WTC11 (cell line): ENCODE measurements at regions of chr5 and their contacts with region 1.

Region 1: GRCh38 chr5:175729829-175730277 is 72.0 kb downstream of the HRH2 start:
- DNase-seq: peak; percentile 100
- ATAC-seq: peak; percentile 87
- H3K4me3 Mint-ChIP-seq: peak overlapping the region; percentile 74
- H3K27ac Mint-ChIP-seq: no peak overlapping the region
- H3K4me1 Mint-ChIP-seq: peaks cover 27% of the 10 kb centered on the region
- H3K27me3 Mint-ChIP-seq: peaks cover 5% of the 10 kb centered on the region
- CTCF ChIP-seq: peak; percentile 98

Region 2: GRCh38 chr5:175288048-175288621 is 441.7 kb before region 1 on chr5:
- CTCF ChIA-PET with region 1: no interaction called
- POLR2A ChIA-PET with region 1: no interaction called
- DNase-seq: no peak
- ATAC-seq: no peak
- H3K4me3 Mint-ChIP-seq: no peak overlapping the region
- H3K27ac Mint-ChIP-seq: no peak overlapping the region
- H3K4me1 Mint-ChIP-seq: no peaks in the 10 kb centered on the region
- H3K27me3 Mint-ChIP-seq: no peaks in the 10 kb centered on the region
- CTCF ChIP-seq: no peak

Region 3: GRCh38 chr5:175325681-175326080 is 404.2 kb before region 1 on chr5:
- CTCF ChIA-PET with region 1: no interaction called
- POLR2A ChIA-PET with region 1: no interaction called
- DNase-seq: no peak
- ATAC-seq: no peak
- H3K4me3 Mint-ChIP-seq: no peak overlapping the region
- H3K27ac Mint-ChIP-seq: no peak overlapping the region
- H3K4me1 Mint-ChIP-seq: peaks cover 16% of the 10 kb centered on the region
- H3K27me3 Mint-ChIP-seq: no peaks in the 10 kb centered on the region; the same call in 1 of the 2 replicates
- CTCF ChIP-seq: no peak

Region 4: GRCh38 chr5:175385691-175386362 is 344.0 kb before region 1 on chr5:
- CTCF ChIA-PET with region 1: no interaction called
- POLR2A ChIA-PET with region 1: no interaction called
- DNase-seq: no peak
- ATAC-seq: no peak
- H3K4me3 Mint-ChIP-seq: no peak overlapping the region
- H3K27ac Mint-ChIP-seq: no peak overlapping the region
- H3K4me1 Mint-ChIP-seq: peaks cover 7% of the 10 kb centered on the region
- H3K27me3 Mint-ChIP-seq: no peaks in the 10 kb centered on the region
- CTCF ChIP-seq: no peak

Region 5: GRCh38 chr5:175534070-175534932 is 195.6 kb before region 1 on chr5:
- CTCF ChIA-PET with region 1: interaction called, 302 read pairs
- POLR2A ChIA-PET with region 1: interaction called, 5 read pairs
- DNase-seq: peak; percentile 92
- ATAC-seq: peak; percentile 89
- H3K4me3 Mint-ChIP-seq: peak overlapping the region; percentile 33
- H3K27ac Mint-ChIP-seq: no peak overlapping the region
- H3K4me1 Mint-ChIP-seq: peaks cover 41% of the 10 kb centered on the region
- H3K27me3 Mint-ChIP-seq: no peaks in the 10 kb centered on the region
- CTCF ChIP-seq: peak; percentile 99

Region 6: DNA sequence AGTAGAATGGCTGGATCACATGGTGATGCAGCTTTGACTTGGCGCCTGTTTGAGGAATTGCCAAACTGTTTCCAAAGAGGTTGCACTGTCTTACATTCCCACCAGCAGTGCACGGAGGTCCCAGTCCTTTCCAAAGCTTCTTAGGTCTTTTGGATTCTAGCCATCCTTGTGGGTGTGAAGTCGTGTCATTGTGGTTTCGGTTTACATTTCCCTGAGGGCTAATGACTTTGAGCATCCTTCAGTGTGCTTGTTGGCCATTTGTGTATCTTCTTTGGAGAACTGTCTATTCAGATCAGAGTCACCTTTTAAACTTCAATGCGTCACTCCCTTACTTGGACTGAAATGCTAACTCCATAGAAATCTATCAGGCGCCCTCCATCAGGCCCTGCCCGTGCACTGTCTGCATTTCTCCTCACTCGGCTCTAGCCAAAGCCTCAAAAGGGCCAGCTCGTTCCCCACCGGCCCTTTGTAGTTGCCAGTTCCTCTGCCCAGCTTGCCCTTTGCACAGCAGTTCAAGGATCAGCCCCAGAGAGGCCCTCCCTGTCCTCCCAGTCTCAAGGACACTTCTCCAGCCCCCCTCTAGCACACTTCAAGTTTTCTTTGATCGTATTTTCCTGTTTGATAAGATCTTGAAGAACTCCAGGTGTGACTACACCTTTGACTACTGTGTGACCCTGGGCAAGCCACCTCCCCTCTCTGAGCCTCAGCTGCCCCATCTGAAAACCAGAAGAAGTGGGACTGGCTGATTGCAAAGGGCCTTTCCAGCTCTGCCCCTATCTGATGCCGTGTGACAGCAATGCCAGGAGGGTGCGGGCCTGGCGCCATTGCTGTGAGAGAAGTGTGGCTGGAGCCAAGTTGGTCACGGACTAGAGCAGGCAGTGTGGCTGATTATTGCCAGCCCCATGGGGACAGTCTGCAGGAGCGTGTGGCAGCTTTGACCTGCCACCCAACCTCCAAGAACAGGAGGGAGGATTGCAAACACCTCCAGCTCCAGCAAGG is 66.4 kb before region 1 on chr5:
- CTCF ChIA-PET with region 1: interaction called, 14 read pairs
- POLR2A ChIA-PET with region 1: no interaction called
- DNase-seq: no peak
- ATAC-seq: no peak
- H3K4me3 Mint-ChIP-seq: no peak overlapping the region
- H3K27ac Mint-ChIP-seq: no peak overlapping the region
- H3K4me1 Mint-ChIP-seq: peaks cover 17% of the 10 kb centered on the region
- H3K27me3 Mint-ChIP-seq: peaks cover 3% of the 10 kb centered on the region; the same call in 1 of the 2 replicates
- CTCF ChIP-seq: no peak

Region 7: GRCh38 chr5:175741556-175741955 is 11.7 kb after region 1 on chr5:
- CTCF ChIA-PET with region 1: interaction called, 54 read pairs
- POLR2A ChIA-PET with region 1: no interaction called
- DNase-seq: no peak
- ATAC-seq: no peak
- H3K4me3 Mint-ChIP-seq: no peak overlapping the region
- H3K27ac Mint-ChIP-seq: no peak overlapping the region
- H3K4me1 Mint-ChIP-seq: peaks cover 4% of the 10 kb centered on the region
- H3K27me3 Mint-ChIP-seq: peaks cover 3% of the 10 kb centered on the region; the same call in 1 of the 2 replicates
- CTCF ChIP-seq: no peak

Region 8: DNA sequence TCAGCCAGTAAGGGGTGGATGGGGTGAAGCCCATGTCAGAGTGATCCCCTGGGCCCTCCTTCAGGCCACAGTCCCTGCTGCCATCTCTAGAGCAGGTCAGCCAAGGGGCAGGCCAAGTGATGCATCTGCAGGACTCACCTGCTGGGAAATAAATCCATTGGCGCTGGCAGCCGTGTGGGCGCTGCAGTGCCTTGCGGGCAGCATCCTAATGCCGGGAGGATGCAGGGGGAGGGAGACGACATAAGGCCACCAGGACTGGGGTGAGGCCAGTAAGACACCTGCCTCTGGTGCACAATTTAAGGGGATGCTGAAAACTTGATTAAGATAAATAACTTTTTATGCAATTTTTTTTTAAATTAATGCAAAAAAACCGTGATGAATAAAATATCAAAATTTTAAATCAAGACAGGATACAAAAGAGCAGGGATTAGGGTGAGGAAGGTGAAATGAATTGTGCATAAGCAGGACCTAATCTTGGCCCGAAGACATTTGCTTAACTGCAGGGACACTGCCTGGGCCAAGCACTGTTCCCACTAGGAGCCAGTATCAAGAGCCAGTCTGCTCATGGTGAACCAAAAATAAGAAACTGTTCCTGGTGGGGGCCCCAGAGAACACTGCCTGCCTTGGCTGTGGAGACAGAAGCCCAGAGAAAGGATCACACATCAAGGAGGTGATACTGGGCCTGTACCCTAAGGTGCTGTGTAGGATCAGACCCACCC is 74.0 kb after region 1 on chr5:
- CTCF ChIA-PET with region 1: interaction called, 115 read pairs
- POLR2A ChIA-PET with region 1: no interaction called
- DNase-seq: no peak
- ATAC-seq: peak; percentile 33; the same call in 1 of the 2 replicates
- H3K4me3 Mint-ChIP-seq: no peak overlapping the region
- H3K27ac Mint-ChIP-seq: no peak overlapping the region
- H3K4me1 Mint-ChIP-seq: peaks cover 26% of the 10 kb centered on the region
- H3K27me3 Mint-ChIP-seq: no peaks in the 10 kb centered on the region
- CTCF ChIP-seq: no peak

Region 9: DNA sequence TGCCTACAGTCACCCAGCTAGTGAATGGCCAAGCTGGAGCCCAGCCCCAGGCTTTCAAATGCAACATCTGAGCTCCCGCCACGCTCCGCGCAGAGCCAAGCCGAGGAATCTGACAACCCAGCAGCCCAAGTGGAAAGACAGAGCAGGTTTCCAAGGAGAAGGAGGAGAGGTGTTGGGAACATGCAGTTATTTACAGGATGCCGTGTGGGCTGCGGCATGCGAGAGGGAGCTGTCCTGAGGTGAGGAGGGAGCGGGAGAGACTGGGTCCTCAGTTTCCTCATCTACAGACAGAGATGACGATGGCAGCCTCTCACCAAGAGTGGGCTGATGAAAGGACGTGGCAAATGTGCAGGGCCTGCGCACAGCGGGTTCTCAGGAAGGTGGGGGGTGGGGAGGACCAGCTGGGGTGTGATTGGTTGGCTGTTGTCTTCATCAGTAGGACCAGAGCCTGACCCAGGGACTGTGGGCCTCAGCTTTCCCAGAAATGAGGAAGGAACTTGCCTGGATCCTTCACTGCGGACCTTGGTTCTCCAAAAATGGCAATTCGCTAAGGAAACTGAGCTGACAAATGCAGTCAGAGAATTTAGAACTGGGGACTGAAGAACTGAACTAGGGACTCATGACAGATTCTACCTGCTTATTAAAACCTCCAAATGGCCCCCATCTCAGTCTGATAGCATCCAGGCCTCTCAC is 126.7 kb after region 1 on chr5:
- CTCF ChIA-PET with region 1: interaction called, 140 read pairs
- POLR2A ChIA-PET with region 1: no interaction called
- DNase-seq: no peak
- ATAC-seq: no peak
- H3K4me3 Mint-ChIP-seq: no peak overlapping the region
- H3K27ac Mint-ChIP-seq: no peak overlapping the region
- H3K4me1 Mint-ChIP-seq: peaks cover 14% of the 10 kb centered on the region
- H3K27me3 Mint-ChIP-seq: no peaks in the 10 kb centered on the region; the same call in 1 of the 2 replicates
- CTCF ChIP-seq: no peak

Region 10: GRCh38 chr5:175902026-175902425 is 172.2 kb after region 1 on chr5:
- CTCF ChIA-PET with region 1: interaction called, 41 read pairs
- POLR2A ChIA-PET with region 1: no interaction called
- DNase-seq: no peak
- ATAC-seq: no peak
- H3K4me3 Mint-ChIP-seq: no peak overlapping the region
- H3K27ac Mint-ChIP-seq: no peak overlapping the region
- H3K4me1 Mint-ChIP-seq: no peaks in the 10 kb centered on the region
- H3K27me3 Mint-ChIP-seq: no peaks in the 10 kb centered on the region
- CTCF ChIP-seq: no peak